ENCODE measurements at regions of chr11 and their contacts with region 1.

Region 1: GRCh38 chr11:86802601-86803051 is 2.3 kb downstream of the PRSS23 start:
- DNase-seq: no peak
- H3K4me3 Mint-ChIP-seq: no peak overlapping the region
- H3K27ac Mint-ChIP-seq: no peak overlapping the region
- H3K4me1 Mint-ChIP-seq: peaks cover 59% of the 10 kb centered on the region
- H3K27me3 Mint-ChIP-seq: peaks cover 50% of the 10 kb centered on the region

Region 2: GRCh38 chr11:85627998-85628770 is 1174.4 kb before region 1 on chr11 and contains the start of gene TMEM126B:
- intact Hi-C with region 1: loop called (anchors 10 kb)
- DNase-seq: peak; percentile 95
- H3K4me3 Mint-ChIP-seq: peak within 1 kb of the TSS; percentile 89
- H3K27ac Mint-ChIP-seq: peak within 1 kb of the TSS; percentile 88
- H3K4me1 Mint-ChIP-seq: peaks cover 38% of the 10 kb centered on the region
- H3K27me3 Mint-ChIP-seq: peaks cover 2% of the 10 kb centered on the region
- total RNA-seq, gene TMEM126B: 63.8 and 66.5 TPM in 2 replicates

Region 3: DNA sequence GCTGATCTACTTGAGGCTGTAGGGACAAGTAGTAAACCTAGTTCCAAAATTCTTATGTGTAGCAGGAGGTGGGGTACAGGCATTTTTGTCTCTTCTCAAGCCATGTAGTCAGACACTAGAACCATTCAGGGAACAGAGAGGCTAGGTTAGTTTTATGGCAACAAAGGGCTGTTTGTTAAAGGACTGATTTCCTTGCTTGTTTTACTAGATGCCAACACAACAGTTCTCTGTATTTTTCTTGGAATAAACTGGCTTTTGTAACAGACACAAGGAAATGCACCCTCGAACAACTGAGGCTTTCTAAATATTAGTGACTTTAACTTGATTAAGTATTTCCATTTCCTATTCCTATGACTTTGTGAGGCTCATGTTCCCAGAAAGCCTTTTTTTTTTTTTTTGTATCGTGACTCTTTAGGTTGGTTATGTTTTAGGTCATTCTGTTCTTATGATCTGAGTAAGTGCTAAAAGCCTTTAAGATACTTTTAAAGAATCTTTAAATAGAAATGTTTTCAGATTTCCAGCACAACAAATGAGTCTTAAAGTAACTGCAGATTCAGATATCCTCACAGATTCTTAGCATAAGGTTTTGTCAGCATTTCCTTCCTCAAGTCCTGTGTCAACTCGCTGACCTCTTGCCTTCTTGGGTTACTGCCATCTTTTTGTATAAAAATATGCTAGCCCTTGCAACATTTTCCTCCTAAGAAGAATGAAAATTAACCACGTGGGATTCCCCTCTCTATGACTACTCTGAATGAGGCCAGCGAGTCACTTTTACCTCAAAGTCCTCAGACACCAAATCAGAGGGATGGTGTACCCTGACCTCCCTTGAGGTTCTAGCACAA is 855.0 kb before region 1 on chr11:
- intact Hi-C with region 1: loop called (anchors 2 kb)
- DNase-seq: no peak
- H3K4me3 Mint-ChIP-seq: peak overlapping the region; percentile 15
- H3K27ac Mint-ChIP-seq: peak overlapping the region; percentile 75
- H3K4me1 Mint-ChIP-seq: peaks cover 35% of the 10 kb centered on the region
- H3K27me3 Mint-ChIP-seq: no peaks in the 10 kb centered on the region

Region 4: GRCh38 chr11:86456052-86456939 is 346.3 kb before region 1 on chr11:
- intact Hi-C with region 1: loop called (anchors 2 kb)
- DNase-seq: peak; percentile 56
- H3K4me3 Mint-ChIP-seq: no peak overlapping the region
- H3K27ac Mint-ChIP-seq: no peak overlapping the region
- H3K4me1 Mint-ChIP-seq: peaks cover 27% of the 10 kb centered on the region
- H3K27me3 Mint-ChIP-seq: no peaks in the 10 kb centered on the region

Region 5: GRCh38 chr11:86592659-86593451 is 209.8 kb before region 1 on chr11:
- intact Hi-C with region 1: loop called (anchors 1 kb)
- DNase-seq: peak; percentile 74
- H3K4me3 Mint-ChIP-seq: no peak overlapping the region
- H3K27ac Mint-ChIP-seq: peak overlapping the region; percentile 81
- H3K4me1 Mint-ChIP-seq: peaks cover 43% of the 10 kb centered on the region
- H3K27me3 Mint-ChIP-seq: no peaks in the 10 kb centered on the region

Region 6: GRCh38 chr11:86740709-86741483 is 61.7 kb before region 1 on chr11:
- intact Hi-C with region 1: loop called (anchors 1 kb)
- DNase-seq: no peak
- H3K4me3 Mint-ChIP-seq: no peak overlapping the region
- H3K27ac Mint-ChIP-seq: no peak overlapping the region
- H3K4me1 Mint-ChIP-seq: peaks cover 27% of the 10 kb centered on the region
- H3K27me3 Mint-ChIP-seq: no peaks in the 10 kb centered on the region